Activated CD4-positive, alpha-beta memory T cell treated with anti-CD3 and anti-CD28 coated beads, Interleukin-2, amount 10 ng/mL, durations not matched to agents 7 days and 5 days (primary cell): ENCODE measurements at regions of chr6 and their contacts with region 1.

Region 1: GRCh38 chr6:27864906-27865849 is 47.0 kb downstream of the OR2B2 start:
- DNase-seq: peak; percentile 85
- H3K4me3 Mint-ChIP-seq: peak overlapping the region; percentile 81
- H3K27ac Mint-ChIP-seq: peak overlapping the region; percentile 99
- H3K4me1 Mint-ChIP-seq: peaks cover 61% of the 10 kb centered on the region
- H3K27me3 Mint-ChIP-seq: peaks cover 4% of the 10 kb centered on the region

Region 2: GRCh38 chr6:26156076-26156849 is 1708.9 kb before region 1 on chr6:
- CTCF ChIA-PET with region 1: no interaction called
- POLR2A ChIA-PET with region 1: interaction called, 90 read pairs
- DNase-seq: peak; percentile 91
- H3K4me3 Mint-ChIP-seq: peak overlapping the region; percentile 95
- H3K27ac Mint-ChIP-seq: peak overlapping the region; percentile 98
- H3K4me1 Mint-ChIP-seq: peaks cover 45% of the 10 kb centered on the region
- H3K27me3 Mint-ChIP-seq: no peaks in the 10 kb centered on the region

Region 3: DNA sequence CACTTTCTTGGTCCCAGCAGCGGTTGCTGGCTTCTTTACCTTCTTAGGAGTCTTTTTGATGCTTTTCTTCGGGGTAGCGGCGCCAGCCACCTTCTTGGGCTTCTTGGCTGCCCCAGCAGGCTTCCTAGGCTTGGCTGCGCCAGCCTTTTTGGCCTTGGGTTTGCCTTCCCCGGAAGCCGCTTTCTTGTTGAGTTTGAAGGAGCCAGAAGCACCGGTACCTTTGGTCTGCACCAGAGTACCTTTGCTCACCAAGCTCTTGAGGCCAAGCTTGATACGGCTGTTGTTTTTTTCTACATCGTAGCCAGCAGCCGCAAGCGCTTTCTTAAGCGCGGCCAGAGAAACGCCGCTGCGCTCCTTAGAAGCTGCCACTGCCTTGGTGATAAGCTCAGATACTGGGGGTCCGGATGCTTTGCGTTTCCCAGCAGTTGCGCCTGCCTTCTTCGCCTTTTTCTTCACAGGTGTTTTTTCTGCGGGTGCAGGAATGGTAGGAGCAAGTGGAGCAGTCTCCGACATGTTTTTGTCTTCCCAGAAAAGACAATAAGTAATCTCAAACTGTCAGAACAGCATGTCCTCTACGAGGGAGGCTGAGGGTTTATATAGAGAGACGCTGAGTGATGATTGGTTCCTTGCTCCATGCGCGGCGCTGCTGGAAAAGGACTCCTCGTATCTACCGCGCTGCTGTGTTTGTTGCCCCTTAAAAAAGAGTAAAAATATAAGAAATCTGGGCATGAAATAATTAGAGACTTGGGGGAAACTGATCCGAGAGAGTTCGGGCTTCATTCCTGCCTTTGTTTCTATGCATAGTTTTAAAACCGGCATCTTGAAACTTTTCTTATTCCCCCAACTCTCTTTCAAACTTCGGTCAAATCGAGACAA is 1630.5 kb before region 1 on chr6:
- CTCF ChIA-PET with region 1: no interaction called
- POLR2A ChIA-PET with region 1: interaction called, 44 read pairs
- DNase-seq: peak; percentile 85
- H3K4me3 Mint-ChIP-seq: peak overlapping the region; percentile 76
- H3K27ac Mint-ChIP-seq: peak overlapping the region; percentile 95
- H3K4me1 Mint-ChIP-seq: peaks cover 41% of the 10 kb centered on the region
- H3K27me3 Mint-ChIP-seq: no peaks in the 10 kb centered on the region

Region 4: GRCh38 chr6:27138837-27139755 is 726.1 kb before region 1 on chr6:
- CTCF ChIA-PET with region 1: no interaction called
- POLR2A ChIA-PET with region 1: interaction called, 236 read pairs
- DNase-seq: peak; percentile 80
- H3K4me3 Mint-ChIP-seq: peak overlapping the region; percentile 91
- H3K27ac Mint-ChIP-seq: peak overlapping the region; percentile 98
- H3K4me1 Mint-ChIP-seq: peaks cover 67% of the 10 kb centered on the region
- H3K27me3 Mint-ChIP-seq: no peaks in the 10 kb centered on the region

Region 5: GRCh38 chr6:27753668-27754407 is 111.3 kb before region 1 on chr6:
- CTCF ChIA-PET with region 1: interaction called, 3 read pairs
- POLR2A ChIA-PET with region 1: interaction called, 12 read pairs
- DNase-seq: peak; percentile 80
- H3K4me3 Mint-ChIP-seq: peak overlapping the region; percentile 73
- H3K27ac Mint-ChIP-seq: peak overlapping the region; percentile 100
- H3K4me1 Mint-ChIP-seq: peaks cover 48% of the 10 kb centered on the region
- H3K27me3 Mint-ChIP-seq: peaks cover 5% of the 10 kb centered on the region

Region 6: GRCh38 chr6:27847706-27848105 is 17.5 kb before region 1 on chr6:
- CTCF ChIA-PET with region 1: interaction called, 7 read pairs
- POLR2A ChIA-PET with region 1: interaction called, 71 read pairs
- DNase-seq: no peak
- H3K4me3 Mint-ChIP-seq: no peak overlapping the region
- H3K27ac Mint-ChIP-seq: no peak overlapping the region
- H3K4me1 Mint-ChIP-seq: no peaks in the 10 kb centered on the region
- H3K27me3 Mint-ChIP-seq: peaks cover 17% of the 10 kb centered on the region

Region 7: GRCh38 chr6:28923318-28924102 is 1058.3 kb after region 1 on chr6 and contains the start of gene TRIM27:
- CTCF ChIA-PET with region 1: no interaction called
- POLR2A ChIA-PET with region 1: interaction called, 10 read pairs
- DNase-seq: peak; percentile 84
- H3K4me3 Mint-ChIP-seq: peak within 1 kb of the TSS; percentile 77
- H3K27ac Mint-ChIP-seq: peak within 1 kb of the TSS; percentile 94
- H3K4me1 Mint-ChIP-seq: peaks cover 39% of the 10 kb centered on the region
- H3K27me3 Mint-ChIP-seq: no peaks in the 10 kb centered on the region
- total RNA-seq, gene TRIM27: 56.8 to 58.0 TPM